Dorsolateral prefrontal cortex (tissue), 120 donors: ENCODE measurements at regions of chr18 and their contacts with region 1.

Region 1: DNA sequence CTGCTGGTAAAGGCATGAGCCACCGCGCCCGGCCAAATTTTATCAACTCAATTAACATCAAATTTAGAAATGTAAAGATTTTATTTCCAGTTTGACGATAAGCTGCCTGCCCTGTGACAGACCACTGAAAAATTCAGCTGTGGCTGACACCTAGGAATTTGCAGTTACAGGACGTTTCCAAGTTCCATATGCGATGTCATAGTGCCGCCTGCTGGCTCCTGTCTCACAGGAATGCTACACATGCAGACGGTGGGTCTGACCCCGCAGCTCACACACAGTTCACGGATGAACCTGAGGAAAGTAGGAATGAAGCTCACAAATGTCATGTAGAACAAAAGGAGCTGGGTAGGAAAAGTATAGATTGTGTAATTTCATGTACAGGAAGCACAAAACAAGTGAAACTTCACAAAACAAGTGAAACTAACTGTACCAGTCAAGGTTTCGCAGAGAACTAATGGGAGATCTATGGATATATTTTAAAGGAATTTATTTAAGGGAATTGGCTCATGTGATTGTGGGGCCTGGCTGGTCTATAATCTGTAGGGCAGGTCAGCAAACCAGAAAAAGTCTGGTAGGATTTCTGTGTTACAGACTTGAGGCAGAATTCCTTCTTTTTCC is 13.2 kb upstream of the SEH1L start:
- DNase-seq: peak; percentile 69 to 93 (median 84)
- H3K4me3 ChIP-seq: peak overlapping the region in 3 of 59 donors; percentile 2 to 25 (median 14)
- H3K27ac ChIP-seq: no peak overlapping the region
- H3K27me3 ChIP-seq: no peaks in the 10 kb centered on the region
- CTCF ChIP-seq: peak; percentile 71 to 99 (median 89)

Region 2: DNA sequence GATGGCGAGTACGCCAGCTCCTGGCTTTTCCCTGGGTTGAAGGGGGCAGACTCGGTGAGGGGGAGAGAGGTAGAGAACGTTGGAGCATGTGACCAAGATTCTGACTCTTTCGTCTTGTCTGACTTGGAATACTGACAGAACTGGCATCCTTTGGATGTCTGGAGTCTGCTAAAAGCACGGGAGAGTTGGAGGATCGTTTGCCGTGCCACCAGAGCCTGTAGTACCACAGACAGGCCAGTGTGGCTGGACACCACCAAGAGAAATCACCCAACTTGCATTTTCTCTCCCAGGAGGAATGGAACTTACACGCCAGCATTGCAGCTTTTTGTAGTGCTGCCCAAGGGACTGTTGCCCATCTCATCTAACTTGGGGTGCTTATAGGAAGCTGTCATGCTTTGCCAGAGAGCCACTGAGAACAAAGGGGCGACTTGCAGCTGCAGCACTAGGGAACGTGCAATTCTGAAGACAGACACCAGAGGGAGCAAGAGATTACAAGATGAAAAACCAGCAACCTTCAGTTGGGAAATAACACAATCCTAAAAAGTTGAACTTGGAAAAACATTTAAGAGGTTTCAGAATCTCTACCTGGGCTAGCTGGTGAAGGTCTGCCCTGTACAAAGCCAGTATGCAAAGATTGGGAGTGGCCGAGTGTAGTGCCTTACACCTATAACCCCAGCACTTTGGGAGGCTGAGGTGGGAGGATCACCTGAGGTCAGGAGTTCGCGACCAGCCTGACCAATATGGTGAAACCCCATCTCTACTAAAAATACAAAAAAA is 207.6 kb before region 1 on chr18:
- intact Hi-C with region 1: loop called (anchors 1 to 5 kb)
- DNase-seq: peak in 4 of 10 donors; percentile 29 to 76 (median 54)
- H3K4me3 ChIP-seq: peak overlapping the region in 2 of 59 donors; percentile 5 to 10
- H3K27ac ChIP-seq: peak overlapping the region in 39 of 59 donors; percentile 6 to 75 (median 49)
- H3K27me3 ChIP-seq: no peaks in the 10 kb centered on the region
- CTCF ChIP-seq: peak; percentile 79 to 98 (median 95)

Region 3: GRCh38 chr18:13076886-13077285 is 142.3 kb after region 1 on chr18:
- intact Hi-C with region 1: no loop called
- DNase-seq: no peak
- H3K4me3 ChIP-seq: no peak overlapping the region
- H3K27ac ChIP-seq: no peak overlapping the region
- H3K27me3 ChIP-seq: no peaks in the 10 kb centered on the region
- CTCF ChIP-seq: no peak